ENCODE measurements at regions of chr4 and their contacts with region 1.

Region 1: GRCh38 chr4:25395876-25396275 is 18.8 kb downstream of the ANAPC4 start:
- DNase-seq: no peak
- ATAC-seq: no peak
- H3K4me3 ChIP-seq: no peak overlapping the region
- H3K27ac ChIP-seq: no peak overlapping the region
- H3K4me1 ChIP-seq: no peaks in the 10 kb centered on the region
- H3K27me3 ChIP-seq: no peaks in the 10 kb centered on the region
- CTCF ChIP-seq: no peak
- POLR2A ChIP-seq: no peak

Region 2: GRCh38 chr4:25417014-25417413 is 21.1 kb after region 1 on chr4:
- intact Hi-C with region 1: loop called (anchors 2 kb)
- DNase-seq: no peak
- ATAC-seq: no peak
- H3K4me3 ChIP-seq: no peak overlapping the region
- H3K27ac ChIP-seq: no peak overlapping the region
- H3K4me1 ChIP-seq: no peaks in the 10 kb centered on the region
- H3K27me3 ChIP-seq: no peaks in the 10 kb centered on the region
- CTCF ChIP-seq: no peak
- POLR2A ChIP-seq: no peak

Region 3: GRCh38 chr4:25531272-25531671 is 135.4 kb after region 1 on chr4:
- intact Hi-C with region 1: no loop called
- DNase-seq: no peak
- ATAC-seq: no peak
- H3K4me3 ChIP-seq: no peak overlapping the region
- H3K27ac ChIP-seq: no peak overlapping the region
- H3K4me1 ChIP-seq: peaks cover 8% of the 10 kb centered on the region
- H3K27me3 ChIP-seq: no peaks in the 10 kb centered on the region
- CTCF ChIP-seq: peak in 1 of 7 experiments; percentile 7
- POLR2A ChIP-seq: no peak